ENCODE measurements at regions of chr4 and their contacts with region 1.

Region 1: DNA sequence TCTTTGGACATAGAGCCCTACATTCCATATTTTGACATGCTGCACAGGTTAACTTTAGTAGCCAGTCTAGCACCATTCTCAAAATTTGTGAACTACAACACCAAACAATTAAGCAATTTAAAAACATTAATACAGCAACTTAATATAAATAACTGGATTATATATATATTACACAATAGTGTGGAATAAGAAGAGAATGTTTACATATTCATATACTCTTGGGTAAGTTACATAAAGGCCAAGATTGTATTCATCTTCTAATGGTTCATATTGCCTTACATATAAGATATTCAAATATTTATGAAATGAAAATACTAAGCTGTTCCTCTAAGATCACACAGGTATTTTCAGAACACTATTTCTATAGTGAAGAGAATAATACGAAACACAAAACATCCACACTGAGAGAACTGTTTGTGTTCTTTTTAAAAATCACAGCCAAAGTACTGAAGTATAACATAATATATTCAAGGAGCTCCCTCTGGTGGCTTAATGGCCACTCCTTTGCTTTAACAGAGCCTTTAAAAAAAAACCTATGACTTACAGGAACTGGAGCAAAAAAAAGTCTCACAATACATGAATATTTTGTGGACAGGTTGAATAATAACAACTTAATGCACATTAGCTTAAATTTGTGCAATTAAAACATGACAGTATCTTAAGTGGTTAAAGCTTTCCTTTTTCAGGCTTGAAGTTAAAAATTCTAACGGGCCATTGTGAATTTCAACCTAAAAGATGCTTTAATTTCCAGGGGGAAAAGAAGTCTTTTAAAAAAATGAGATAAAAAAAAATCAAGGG is 46.2 kb downstream of the NEK1 start:
- DNase-seq: peak; percentile 55
- ATAC-seq: peak; percentile 42
- H3K4me3 ChIP-seq: no peak overlapping the region
- H3K27ac ChIP-seq: no peak overlapping the region
- H3K4me1 ChIP-seq: no peaks in the 10 kb centered on the region
- H3K27me3 ChIP-seq: no peaks in the 10 kb centered on the region
- CTCF ChIP-seq: peak; percentile 79

Region 2: DNA sequence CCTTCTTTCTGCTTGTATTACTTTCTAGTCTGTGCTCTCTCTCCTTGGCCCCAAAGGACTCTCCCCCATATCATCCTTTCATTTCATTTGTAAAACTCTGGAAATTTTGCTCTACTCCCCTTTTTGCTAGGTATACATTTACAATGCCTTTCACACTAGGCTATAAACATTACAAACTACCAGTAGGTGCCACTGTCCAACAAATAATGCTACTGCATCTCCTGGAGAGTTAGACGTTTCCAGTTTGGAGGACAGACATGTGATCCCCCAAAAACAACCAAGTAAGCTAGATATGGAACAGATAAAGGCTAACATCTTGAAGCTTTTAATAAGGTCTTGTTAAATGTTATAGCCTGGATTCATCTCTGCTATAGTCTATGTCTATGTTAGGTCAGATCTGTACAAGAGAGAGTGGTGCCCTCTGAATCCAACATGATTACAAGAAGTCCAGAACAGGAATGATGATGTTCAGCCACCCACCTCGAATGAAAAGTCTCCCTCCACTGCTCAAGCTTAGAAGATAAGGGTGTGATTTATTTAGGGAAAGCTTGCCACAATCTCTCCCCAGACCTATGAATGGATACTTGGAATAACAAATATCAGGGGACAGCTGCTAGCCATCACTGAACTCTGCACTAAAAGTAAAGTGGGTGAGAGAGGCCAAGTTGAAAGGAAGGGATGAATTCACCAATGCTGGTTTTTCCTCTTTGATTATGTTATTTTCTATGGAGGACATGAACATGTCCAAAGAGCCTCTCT is 570.5 kb before region 1 on chr4:
- CTCF ChIA-PET with region 1: no interaction called
- POLR2A ChIA-PET with region 1: no interaction called
- intact Hi-C with region 1: loop called (anchors 10 kb)
- DNase-seq: peak; percentile 59
- ATAC-seq: peak; percentile 73
- H3K4me3 ChIP-seq: no peak overlapping the region
- H3K27ac ChIP-seq: no peak overlapping the region
- H3K4me1 ChIP-seq: no peaks in the 10 kb centered on the region
- H3K27me3 ChIP-seq: no peaks in the 10 kb centered on the region
- CTCF ChIP-seq: peak; percentile 66

Region 3: GRCh38 chr4:169492438-169493163 is 73.6 kb before region 1 on chr4:
- CTCF ChIA-PET with region 1: no interaction called
- POLR2A ChIA-PET with region 1: no interaction called
- intact Hi-C with region 1: loop called (anchors 5 kb)
- DNase-seq: peak; percentile 62
- ATAC-seq: peak; percentile 58
- H3K4me3 ChIP-seq: no peak overlapping the region
- H3K27ac ChIP-seq: no peak overlapping the region
- H3K4me1 ChIP-seq: no peaks in the 10 kb centered on the region
- H3K27me3 ChIP-seq: no peaks in the 10 kb centered on the region
- CTCF ChIP-seq: peak; percentile 79